ENCODE measurements at regions of chr17 and their contacts with region 1.

Region 1: DNA sequence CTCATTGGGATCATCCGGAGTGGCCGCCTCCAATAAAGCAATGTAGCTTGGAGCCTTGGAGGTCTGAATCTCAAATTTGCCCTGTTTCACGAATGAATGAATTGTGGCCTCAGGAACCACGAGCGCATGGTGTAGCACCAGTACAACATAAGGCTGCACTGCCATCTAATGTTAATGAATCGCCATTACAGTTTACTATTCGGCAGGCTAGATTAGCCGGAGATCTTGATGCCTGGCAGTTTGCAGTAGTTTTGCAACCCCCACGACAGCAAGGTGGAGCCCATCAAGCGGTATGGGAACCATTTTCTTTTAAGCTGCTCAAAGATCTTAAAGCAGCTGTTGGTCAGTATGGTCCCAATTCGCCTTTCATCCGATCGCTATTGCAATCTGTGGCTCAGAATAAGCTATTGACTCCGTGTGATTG is 18.8 kb downstream of the ALOX15B start:
- DNase-seq: peak; percentile 76
- H3K4me3 ChIP-seq: no peak overlapping the region
- H3K27ac ChIP-seq: no peak overlapping the region
- H3K4me1 ChIP-seq: peaks cover 16% of the 10 kb centered on the region
- H3K27me3 ChIP-seq: peaks cover 28 to 38% of the 10 kb centered on the region in 2 experiments
- CTCF ChIP-seq: peak; percentile 63 to 70
- POLR2A ChIP-seq: no peak

Region 2: GRCh38 chr17:7745748-7746470 is 311.8 kb before region 1 on chr17:
- CTCF ChIA-PET with region 1: interaction called, 26 read pairs
- POLR2A ChIA-PET with region 1: no interaction called
- dilution Hi-C with region 1: no loop called
- intact Hi-C with region 1: no loop called
- DNase-seq: peak; percentile 98
- H3K4me3 ChIP-seq: no peak overlapping the region
- H3K27ac ChIP-seq: peak overlapping the region; percentile 58
- H3K4me1 ChIP-seq: peaks cover 17% of the 10 kb centered on the region
- H3K27me3 ChIP-seq: peaks cover 0 to under 1% of the 10 kb centered on the region in 2 experiments
- CTCF ChIP-seq: peak in 1 of 2 donors; percentile 18
- POLR2A ChIP-seq: no peak

Region 3: DNA sequence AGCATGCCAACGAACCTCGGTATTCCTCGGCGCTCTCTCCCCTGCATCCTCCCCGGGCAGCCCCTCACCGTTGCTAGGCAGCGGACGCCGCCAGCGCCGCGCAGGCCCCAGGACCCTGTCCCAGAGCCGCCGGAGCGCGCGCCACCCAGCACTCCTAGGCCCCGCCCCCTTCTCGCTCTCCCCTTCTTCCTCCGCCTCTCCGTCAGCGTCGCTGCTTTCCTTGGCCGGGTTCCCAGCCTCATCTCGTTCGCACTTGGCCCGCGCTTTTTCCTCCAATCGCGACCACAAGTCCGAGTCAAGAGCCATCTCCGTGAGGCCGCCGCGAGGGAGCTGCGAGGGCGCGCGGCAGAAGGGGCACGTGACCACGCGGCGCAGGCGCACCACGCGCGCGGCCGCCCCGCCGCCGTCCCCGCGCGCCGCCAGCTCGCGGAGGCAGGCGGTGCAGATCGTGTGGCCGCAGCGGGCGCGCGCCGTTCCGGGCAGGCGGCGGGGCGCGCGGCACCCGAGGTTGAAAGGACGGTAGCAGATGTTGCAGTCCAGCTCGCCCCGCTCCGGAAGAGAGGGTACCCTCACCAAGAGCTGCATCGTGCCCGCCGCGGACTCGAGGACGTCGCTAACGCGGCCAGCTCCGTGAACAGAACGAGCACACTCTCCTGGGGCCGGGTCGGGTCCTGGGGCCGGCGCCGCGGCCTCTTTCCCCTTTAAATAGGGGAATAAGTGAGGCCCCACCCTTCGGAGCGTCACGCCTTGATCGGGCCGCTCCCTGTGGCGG is 141.9 kb before region 1 on chr17 and contains the start of gene RNF227:
- CTCF ChIA-PET with region 1: interaction called, 21 read pairs
- POLR2A ChIA-PET with region 1: no interaction called
- dilution Hi-C with region 1: no loop called
- intact Hi-C with region 1: loop called (anchors 1 kb)
- DNase-seq: peak; percentile 98
- H3K4me3 ChIP-seq: peak within 1 kb of the TSS in 2 of 3 experiments; percentile 24 to 44
- H3K27ac ChIP-seq: peak within 1 kb of the TSS; percentile 19
- H3K4me1 ChIP-seq: peaks cover 16% of the 10 kb centered on the region
- H3K27me3 ChIP-seq: no peaks in the 10 kb centered on the region
- CTCF ChIP-seq: no peak
- POLR2A ChIP-seq: no peak
- total RNA-seq, gene RNF227: 0.58 TPM in 2 replicates

Region 4: GRCh38 chr17:7997186-7997585 is 60.5 kb before region 1 on chr17:
- CTCF ChIA-PET with region 1: interaction called, 81 read pairs
- POLR2A ChIA-PET with region 1: no interaction called
- dilution Hi-C with region 1: no loop called
- intact Hi-C with region 1: no loop called
- DNase-seq: peak; percentile 36
- H3K4me3 ChIP-seq: no peak overlapping the region
- H3K27ac ChIP-seq: no peak overlapping the region
- H3K4me1 ChIP-seq: no peaks in the 10 kb centered on the region
- H3K27me3 ChIP-seq: peaks cover 26 to 39% of the 10 kb centered on the region in 2 experiments
- CTCF ChIP-seq: peak; percentile 13 to 21
- POLR2A ChIP-seq: no peak

Region 5: GRCh38 chr17:8079291-8080207 is 21.8 kb after region 1 on chr17:
- CTCF ChIA-PET with region 1: interaction called, 158 read pairs
- POLR2A ChIA-PET with region 1: no interaction called
- dilution Hi-C with region 1: no loop called
- intact Hi-C with region 1: loop called (anchors 2 kb)
- DNase-seq: peak; percentile 46
- H3K4me3 ChIP-seq: peak overlapping the region in 2 of 3 experiments; percentile 20 to 32
- H3K27ac ChIP-seq: no peak overlapping the region
- H3K4me1 ChIP-seq: peaks cover 6% of the 10 kb centered on the region
- H3K27me3 ChIP-seq: peaks cover 17 to 23% of the 10 kb centered on the region in 2 experiments
- CTCF ChIP-seq: peak; percentile 83 to 91
- POLR2A ChIP-seq: no peak

Region 6: GRCh38 chr17:8118769-8119580 is 61.3 kb after region 1 on chr17:
- CTCF ChIA-PET with region 1: interaction called, 47 read pairs
- POLR2A ChIA-PET with region 1: no interaction called
- dilution Hi-C with region 1: no loop called
- intact Hi-C with region 1: loop called (anchors 1 kb)
- DNase-seq: peak; percentile 86
- H3K4me3 ChIP-seq: peak overlapping the region; percentile 49 to 88 (median 79)
- H3K27ac ChIP-seq: peak overlapping the region; percentile 10
- H3K4me1 ChIP-seq: peaks cover 31% of the 10 kb centered on the region
- H3K27me3 ChIP-seq: peaks cover 30 to 32% of the 10 kb centered on the region in 2 experiments
- CTCF ChIP-seq: peak; percentile 90 to 93
- POLR2A ChIP-seq: no peak

Region 7: DNA sequence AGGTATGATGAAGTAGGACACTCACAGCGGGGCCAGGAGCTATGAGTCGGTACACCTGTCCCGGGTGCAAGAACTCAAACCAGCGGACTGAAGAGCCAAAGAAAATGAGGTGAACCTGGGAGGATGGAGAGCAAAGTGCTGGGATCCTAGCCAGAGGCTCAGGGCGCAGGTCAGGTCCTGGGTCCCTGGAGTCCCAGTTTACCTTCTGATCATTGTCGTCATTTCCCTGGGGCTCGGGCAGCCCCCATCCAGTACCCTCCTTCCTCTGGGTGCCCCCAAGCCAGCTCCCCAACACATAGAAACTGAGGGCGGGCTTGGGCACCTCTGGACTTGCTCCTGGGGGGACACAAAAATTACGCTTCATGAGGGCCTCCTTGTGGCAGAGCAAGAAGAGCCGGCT is 174.0 kb after region 1 on chr17:
- CTCF ChIA-PET with region 1: no interaction called
- POLR2A ChIA-PET with region 1: no interaction called
- dilution Hi-C with region 1: no loop called
- intact Hi-C with region 1: no loop called
- DNase-seq: no peak
- H3K4me3 ChIP-seq: no peak overlapping the region
- H3K27ac ChIP-seq: no peak overlapping the region
- H3K4me1 ChIP-seq: no peaks in the 10 kb centered on the region
- H3K27me3 ChIP-seq: no peaks in the 10 kb centered on the region
- CTCF ChIP-seq: no peak
- POLR2A ChIP-seq: no peak